ENCODE measurements at regions of chr2 and their contacts with region 1.

Region 1: GRCh38 chr2:158130832-158131473 is 29.3 kb downstream of the UPP2 start:
- DNase-seq: peak; percentile 63 to 76
- H3K4me3 ChIP-seq: no peak overlapping the region
- H3K4me3 Mint-ChIP-seq: peak overlapping the region; percentile 57
- H3K27ac Mint-ChIP-seq: peak overlapping the region; percentile 85
- H3K4me1 ChIP-seq: peaks cover 72% of the 10 kb centered on the region
- H3K4me1 Mint-ChIP-seq: peaks cover 42% of the 10 kb centered on the region
- H3K27me3 ChIP-seq: no peaks in the 10 kb centered on the region
- H3K27me3 Mint-ChIP-seq: no peaks in the 10 kb centered on the region
- CTCF ChIP-seq: no peak

Region 2: GRCh38 chr2:158013891-158014290 is 117.1 kb before region 1 on chr2:
- CTCF ChIA-PET with region 1: no interaction called
- POLR2A ChIA-PET with region 1: no interaction called
- intact Hi-C with region 1: no loop called
- DNase-seq: no peak
- H3K4me3 ChIP-seq: no peak overlapping the region
- H3K4me3 Mint-ChIP-seq: no peak overlapping the region
- H3K27ac Mint-ChIP-seq: no peak overlapping the region
- H3K4me1 ChIP-seq: peaks cover 4% of the 10 kb centered on the region; the same call in 1 of the 2 replicates
- H3K4me1 Mint-ChIP-seq: no peaks in the 10 kb centered on the region
- H3K27me3 ChIP-seq: no peaks in the 10 kb centered on the region
- H3K27me3 Mint-ChIP-seq: peaks cover 2% of the 10 kb centered on the region
- CTCF ChIP-seq: no peak

Region 3: GRCh38 chr2:158072361-158072760 is 58.6 kb before region 1 on chr2:
- CTCF ChIA-PET with region 1: no interaction called
- POLR2A ChIA-PET with region 1: no interaction called
- intact Hi-C with region 1: no loop called
- DNase-seq: no peak
- H3K4me3 ChIP-seq: no peak overlapping the region
- H3K4me3 Mint-ChIP-seq: no peak overlapping the region
- H3K27ac Mint-ChIP-seq: no peak overlapping the region
- H3K4me1 ChIP-seq: no peaks in the 10 kb centered on the region
- H3K4me1 Mint-ChIP-seq: no peaks in the 10 kb centered on the region
- H3K27me3 ChIP-seq: no peaks in the 10 kb centered on the region
- H3K27me3 Mint-ChIP-seq: peaks cover 6% of the 10 kb centered on the region
- CTCF ChIP-seq: no peak

Region 4: DNA sequence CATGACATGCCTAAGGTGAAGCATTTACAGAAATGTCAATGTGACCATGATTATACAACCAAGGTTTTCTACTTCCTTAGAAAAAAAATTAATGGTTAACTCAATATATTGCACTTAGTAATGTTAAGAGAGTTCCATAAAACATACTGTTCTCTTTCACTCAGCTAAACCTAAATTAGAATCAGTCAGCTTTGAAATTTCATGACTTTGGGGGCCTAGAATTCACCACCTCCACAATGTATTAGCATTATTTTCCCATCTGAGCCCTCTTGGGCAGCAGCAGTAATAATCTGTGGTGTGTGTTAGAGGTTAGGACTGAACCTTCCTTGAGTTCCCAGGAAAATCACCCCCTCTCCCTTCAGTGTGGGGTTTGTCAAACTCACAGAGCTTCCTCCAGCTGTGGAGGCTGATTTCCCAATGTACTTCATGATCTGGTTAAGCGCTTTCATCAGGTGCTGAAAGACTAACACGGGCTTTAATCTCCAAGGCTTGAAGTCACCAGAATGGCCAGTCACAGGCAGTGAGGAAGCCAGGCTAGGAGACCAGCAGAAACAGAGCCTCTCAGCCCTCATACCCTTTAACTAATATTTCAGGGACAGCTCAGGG is 36.4 kb before region 1 on chr2:
- CTCF ChIA-PET with region 1: no interaction called
- POLR2A ChIA-PET with region 1: no interaction called
- intact Hi-C with region 1: loop called (anchors 2 kb)
- DNase-seq: peak in 1 of 2 experiments; percentile 12
- H3K4me3 ChIP-seq: no peak overlapping the region
- H3K4me3 Mint-ChIP-seq: no peak overlapping the region
- H3K27ac Mint-ChIP-seq: no peak overlapping the region
- H3K4me1 ChIP-seq: peaks cover 9% of the 10 kb centered on the region; the same call in 1 of the 2 replicates
- H3K4me1 Mint-ChIP-seq: no peaks in the 10 kb centered on the region
- H3K27me3 ChIP-seq: no peaks in the 10 kb centered on the region
- H3K27me3 Mint-ChIP-seq: no peaks in the 10 kb centered on the region
- CTCF ChIP-seq: no peak

Region 5: GRCh38 chr2:158232476-158232875 is 101.5 kb after region 1 on chr2:
- CTCF ChIA-PET with region 1: no interaction called
- POLR2A ChIA-PET with region 1: no interaction called
- intact Hi-C with region 1: loop called (anchors 1 kb)
- DNase-seq: peak in 1 of 2 experiments; percentile 40
- H3K4me3 ChIP-seq: no peak overlapping the region
- H3K4me3 Mint-ChIP-seq: no peak overlapping the region
- H3K27ac Mint-ChIP-seq: no peak overlapping the region
- H3K4me1 ChIP-seq: peaks cover 11% of the 10 kb centered on the region
- H3K4me1 Mint-ChIP-seq: no peaks in the 10 kb centered on the region
- H3K27me3 ChIP-seq: no peaks in the 10 kb centered on the region; the same call in 1 of the 2 replicates
- H3K27me3 Mint-ChIP-seq: no peaks in the 10 kb centered on the region
- CTCF ChIP-seq: no peak

Region 6: DNA sequence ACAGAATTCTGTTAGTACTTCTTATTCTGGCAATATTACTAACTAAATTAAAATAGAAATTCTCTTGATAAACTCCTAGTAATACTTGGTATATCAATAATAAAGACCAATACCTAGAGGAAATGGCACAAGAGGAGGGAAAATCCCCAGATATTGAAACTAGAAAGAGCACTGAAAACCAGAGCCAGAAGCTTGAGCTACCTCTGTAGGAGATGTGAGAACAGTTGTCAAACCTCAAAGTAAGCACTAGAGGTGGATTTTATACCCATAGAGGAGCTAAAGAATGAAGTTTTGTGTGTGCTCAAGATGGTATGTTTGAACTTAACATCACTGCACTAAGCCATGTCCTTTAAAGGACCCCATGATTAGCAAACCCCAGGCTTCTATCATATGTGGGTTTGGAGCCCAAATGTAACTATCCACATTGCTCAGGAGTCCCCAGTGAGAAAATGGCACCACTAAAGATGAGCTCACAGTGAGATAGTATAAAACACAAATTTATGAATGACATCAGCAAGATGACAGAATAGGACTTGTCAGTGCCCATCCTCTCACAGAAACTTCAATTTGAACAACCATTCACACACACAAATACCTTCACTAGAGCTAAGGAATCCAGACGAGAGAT is 447.9 kb after region 1 on chr2:
- CTCF ChIA-PET with region 1: no interaction called
- POLR2A ChIA-PET with region 1: no interaction called
- intact Hi-C with region 1: no loop called
- DNase-seq: no peak
- H3K4me3 ChIP-seq: no peak overlapping the region
- H3K4me3 Mint-ChIP-seq: no peak overlapping the region
- H3K27ac Mint-ChIP-seq: no peak overlapping the region
- H3K4me1 ChIP-seq: peaks cover 12% of the 10 kb centered on the region; the same call in 1 of the 2 replicates
- H3K4me1 Mint-ChIP-seq: peaks cover 7% of the 10 kb centered on the region
- H3K27me3 ChIP-seq: no peaks in the 10 kb centered on the region
- H3K27me3 Mint-ChIP-seq: no peaks in the 10 kb centered on the region
- CTCF ChIP-seq: no peak

Measured in Caco-2 (cell line).